WTC11 (cell line): ENCODE measurements at regions of chr1 and their contacts with region 1.

Region 1: GRCh38 chr1:237851210-237851845 is 39.4 kb downstream of the ZP4 start:
- DNase-seq: peak; percentile 81
- ATAC-seq: peak; percentile 88
- H3K4me3 Mint-ChIP-seq: no peak overlapping the region
- H3K27ac Mint-ChIP-seq: no peak overlapping the region
- H3K4me1 Mint-ChIP-seq: peaks cover 17% of the 10 kb centered on the region
- H3K27me3 Mint-ChIP-seq: no peaks in the 10 kb centered on the region
- CTCF ChIP-seq: peak; percentile 78

Region 2: GRCh38 chr1:237834461-237834860 is 16.9 kb before region 1 on chr1:
- CTCF ChIA-PET with region 1: interaction called, 19 read pairs
- POLR2A ChIA-PET with region 1: no interaction called
- DNase-seq: no peak
- ATAC-seq: no peak
- H3K4me3 Mint-ChIP-seq: no peak overlapping the region
- H3K27ac Mint-ChIP-seq: no peak overlapping the region
- H3K4me1 Mint-ChIP-seq: peaks cover 41% of the 10 kb centered on the region
- H3K27me3 Mint-ChIP-seq: no peaks in the 10 kb centered on the region; the same call in none of the 2 replicates
- CTCF ChIP-seq: no peak

Region 3: GRCh38 chr1:237938553-237938952 is 87.2 kb after region 1 on chr1:
- CTCF ChIA-PET with region 1: interaction called, 25 read pairs
- POLR2A ChIA-PET with region 1: no interaction called
- DNase-seq: peak; percentile 76
- ATAC-seq: peak; percentile 50
- H3K4me3 Mint-ChIP-seq: no peak overlapping the region
- H3K27ac Mint-ChIP-seq: no peak overlapping the region
- H3K4me1 Mint-ChIP-seq: peaks cover 5% of the 10 kb centered on the region
- H3K27me3 Mint-ChIP-seq: no peaks in the 10 kb centered on the region
- CTCF ChIP-seq: peak; percentile 53